ENCODE measurements at regions of chr7 and their contacts with region 1.

Region 1: GRCh38 chr7:44477063-44477830 is 13.2 kb downstream of the NUDCD3 start:
- DNase-seq: peak in 1 of 2 donors; percentile 60
- ATAC-seq: peak; percentile 90
- H3K4me3 ChIP-seq: no peak overlapping the region
- H3K27ac ChIP-seq: no peak overlapping the region
- H3K4me1 ChIP-seq: no peaks in the 10 kb centered on the region
- H3K27me3 ChIP-seq: no peaks in the 10 kb centered on the region

Region 2: GRCh38 chr7:44240983-44241510 is 236.2 kb before region 1 on chr7:
- intact Hi-C with region 1: loop called (anchors 2 kb)
- DNase-seq: peak; percentile 87 to 91
- ATAC-seq: peak; percentile 76
- H3K4me3 ChIP-seq: no peak overlapping the region
- H3K27ac ChIP-seq: no peak overlapping the region
- H3K4me1 ChIP-seq: no peaks in the 10 kb centered on the region
- H3K27me3 ChIP-seq: no peaks in the 10 kb centered on the region

Region 3: DNA sequence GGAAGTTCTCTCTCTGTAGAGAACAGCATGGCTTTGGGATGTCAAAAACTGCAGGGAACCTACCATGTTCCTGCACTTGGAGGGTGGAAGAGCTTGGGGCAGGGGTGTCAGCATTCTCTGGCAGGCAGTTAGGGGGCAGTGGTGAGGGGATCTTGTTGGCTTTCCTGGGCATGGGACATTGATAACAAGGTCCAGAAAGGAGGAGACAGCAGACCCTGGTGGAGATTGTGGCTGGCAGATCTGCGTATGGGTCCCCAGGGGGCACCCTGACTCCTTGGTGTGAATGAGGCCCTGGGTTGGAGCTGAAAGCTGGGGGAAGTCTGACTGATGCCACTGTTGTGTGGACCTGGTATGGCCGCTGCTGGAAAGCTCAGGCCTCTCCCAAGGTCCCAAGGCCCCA is 128.9 kb before region 1 on chr7:
- intact Hi-C with region 1: loop called in 1 of 2 experiments (anchors 5 kb)
- DNase-seq: no peak
- ATAC-seq: no peak
- H3K4me3 ChIP-seq: no peak overlapping the region
- H3K27ac ChIP-seq: no peak overlapping the region
- H3K4me1 ChIP-seq: no peaks in the 10 kb centered on the region
- H3K27me3 ChIP-seq: peaks cover 0 to 1% of the 10 kb centered on the region in 2 donors

Measured in aorta (tissue), 5 donors.